Breast epithelium (tissue), 4 donors: ENCODE measurements at regions of chr3 and their contacts with region 1.

Region 1: GRCh38 chr3:191740712-191741111 is 279.7 kb downstream of the PYDC2 start:
- DNase-seq: no peak
- H3K4me3 ChIP-seq: no peak overlapping the region
- H3K27ac ChIP-seq: no peak overlapping the region
- H3K4me1 ChIP-seq: no peaks in the 10 kb centered on the region
- H3K27me3 ChIP-seq: no peaks in the 10 kb centered on the region
- CTCF ChIP-seq: no peak
- POLR2A ChIP-seq: no peak

Region 2: DNA sequence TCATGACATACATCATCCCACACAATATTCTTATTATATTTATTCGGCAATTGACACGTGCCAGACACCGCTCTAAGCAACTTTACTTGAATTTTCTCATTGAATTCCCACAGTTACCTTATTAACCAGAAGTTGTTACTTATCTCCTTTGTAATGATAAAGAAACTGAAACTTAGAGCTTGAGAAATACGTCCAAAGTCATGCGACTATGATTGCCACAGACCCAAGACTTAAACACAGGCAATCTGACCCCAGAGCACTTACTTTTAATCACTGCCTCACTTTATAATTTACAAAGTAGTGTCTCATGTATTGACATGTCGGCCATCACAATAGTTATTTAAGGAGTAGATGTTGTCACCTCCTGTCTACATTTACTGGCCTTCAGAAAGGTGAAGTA is 1749.2 kb after region 1 on chr3:
- intact Hi-C with region 1: no loop called
- DNase-seq: no peak
- H3K4me3 ChIP-seq: no peak overlapping the region
- H3K27ac ChIP-seq: no peak overlapping the region
- H3K4me1 ChIP-seq: no peaks in the 10 kb centered on the region
- H3K27me3 ChIP-seq: no peaks in the 10 kb centered on the region
- CTCF ChIP-seq: no peak
- POLR2A ChIP-seq: no peak

Region 3: GRCh38 chr3:193585530-193585929 is 1844.8 kb after region 1 on chr3:
- intact Hi-C with region 1: loop called (anchors 10 kb)
- DNase-seq: no peak
- H3K4me3 ChIP-seq: no peak overlapping the region
- H3K27ac ChIP-seq: no peak overlapping the region
- H3K4me1 ChIP-seq: no peaks in the 10 kb centered on the region
- H3K27me3 ChIP-seq: no peaks in the 10 kb centered on the region
- CTCF ChIP-seq: no peak
- POLR2A ChIP-seq: no peak